Activated CD4-positive, alpha-beta memory T cell treated with anti-CD3 and anti-CD28 coated beads for 36 hours (primary cell): ENCODE measurements at regions of chr6 and their contacts with region 1.

Region 1: DNA sequence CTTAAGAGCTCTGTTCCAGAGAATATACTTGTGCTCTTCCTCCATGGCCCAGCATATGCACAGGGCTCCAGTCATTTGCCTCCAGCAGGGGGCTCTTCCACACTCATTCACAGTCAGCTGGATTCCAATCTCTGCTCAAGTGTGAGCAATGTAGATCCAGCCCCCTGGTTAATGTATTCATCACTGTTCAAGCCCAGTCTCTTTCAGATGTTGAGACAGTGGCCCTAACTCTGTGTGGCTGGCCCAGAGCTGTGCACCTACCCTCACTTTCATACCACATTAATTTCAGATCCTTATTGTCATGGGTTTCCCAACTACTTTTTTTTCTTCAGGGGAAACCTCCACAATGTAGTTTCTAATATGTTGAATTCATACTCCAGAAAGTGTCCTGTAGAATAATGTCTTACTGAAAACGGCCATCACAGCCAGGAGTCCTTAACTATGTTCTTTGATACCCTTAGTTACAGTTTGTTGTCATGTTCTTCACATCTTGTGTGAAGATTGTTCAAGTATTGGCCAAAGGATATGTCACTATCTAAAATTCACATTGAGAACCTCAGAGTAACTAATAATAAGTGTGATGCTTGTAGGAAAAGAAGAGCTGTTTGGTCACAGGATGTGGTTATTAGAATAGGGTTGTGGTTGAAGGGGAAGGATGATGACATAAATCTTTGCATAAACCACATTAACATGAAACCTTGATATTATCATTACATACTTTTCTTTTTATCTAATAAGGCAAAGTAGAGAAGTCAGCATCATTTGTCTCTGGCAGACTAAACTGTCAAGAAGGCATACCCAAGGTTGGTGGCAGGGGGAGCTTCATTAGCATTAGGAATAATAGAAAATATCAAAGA is 14.4 kb upstream of the HLA-DQA1 start:
- DNase-seq: peak; percentile 57
- H3K4me3 Mint-ChIP-seq: peak overlapping the region; percentile 42
- H3K27ac Mint-ChIP-seq: peak overlapping the region; percentile 78
- H3K4me1 Mint-ChIP-seq: peaks cover 39% of the 10 kb centered on the region
- H3K27me3 Mint-ChIP-seq: no peaks in the 10 kb centered on the region

Region 2: DNA sequence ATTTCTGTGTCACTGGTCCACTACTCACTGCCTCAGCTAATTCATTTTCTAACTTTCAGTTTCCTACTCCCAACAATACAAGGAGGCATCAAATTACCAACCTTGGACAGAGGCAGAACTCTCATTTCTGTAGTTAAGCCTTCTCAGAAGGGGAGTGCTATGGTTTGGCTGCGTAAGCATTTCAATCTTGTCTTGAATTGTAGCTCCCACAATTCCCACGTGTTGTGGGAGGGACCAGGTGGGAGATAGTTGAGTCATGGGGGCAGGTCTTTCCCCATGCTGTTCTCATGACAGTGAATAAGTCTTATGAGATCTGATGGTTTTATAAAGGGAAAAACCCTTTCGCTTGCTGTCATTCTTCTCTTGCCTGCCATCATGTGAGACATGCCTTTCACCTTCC is 160.2 kb before region 1 on chr6:
- CTCF ChIA-PET with region 1: interaction called, 5 read pairs
- POLR2A ChIA-PET with region 1: no interaction called
- intact Hi-C with region 1: loop called (anchors 5 kb)
- DNase-seq: peak; percentile 81
- H3K4me3 Mint-ChIP-seq: no peak overlapping the region
- H3K27ac Mint-ChIP-seq: no peak overlapping the region
- H3K4me1 Mint-ChIP-seq: peaks cover 11% of the 10 kb centered on the region
- H3K27me3 Mint-ChIP-seq: peaks cover 44% of the 10 kb centered on the region

Region 3: DNA sequence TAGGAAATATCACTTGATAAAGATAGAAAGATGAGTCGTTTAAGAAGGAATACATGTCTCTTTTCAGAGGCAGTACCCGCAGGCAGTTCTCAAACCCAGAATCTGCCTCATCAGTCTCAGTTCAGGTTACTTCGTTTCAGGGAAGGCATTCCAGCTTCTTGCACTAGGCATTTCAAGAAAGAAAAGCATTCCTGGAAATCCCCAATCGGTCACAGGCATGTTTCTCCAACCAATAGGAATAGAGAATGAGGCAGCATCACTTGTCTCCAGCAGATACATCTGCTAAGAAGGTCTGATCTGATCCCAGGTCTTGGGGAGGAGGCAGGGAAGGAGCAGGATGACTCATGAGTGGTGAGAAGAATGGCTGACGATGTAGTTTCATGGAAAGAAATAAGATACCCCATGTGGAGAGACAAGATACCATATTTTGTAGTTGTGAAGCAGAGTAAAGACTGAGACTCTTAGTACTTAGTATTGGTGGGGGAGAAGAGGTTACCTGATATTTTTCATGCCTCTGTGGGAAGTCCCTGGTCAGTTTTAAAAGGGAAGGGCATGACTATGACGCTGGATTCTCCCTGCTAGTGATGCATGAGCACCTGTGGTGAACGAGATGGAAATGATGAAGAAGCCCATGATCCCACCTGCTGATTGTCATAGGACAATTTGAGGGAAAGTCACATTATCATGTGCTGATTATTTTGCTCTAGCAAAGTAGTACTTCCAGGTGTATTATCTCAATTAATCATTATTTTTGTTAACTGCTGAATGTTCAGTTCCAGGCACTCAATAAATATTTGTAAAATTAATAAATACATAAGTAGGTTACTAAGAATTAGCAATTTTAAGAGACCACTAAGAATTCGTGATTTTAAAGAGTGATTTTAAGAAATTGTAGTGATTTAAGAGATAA is 12.8 kb before region 1 on chr6:
- CTCF ChIA-PET with region 1: interaction called, 4 read pairs
- POLR2A ChIA-PET with region 1: interaction called, 3 read pairs
- intact Hi-C with region 1: loop called (anchors 1 kb)
- DNase-seq: peak; percentile 46
- H3K4me3 Mint-ChIP-seq: no peak overlapping the region
- H3K27ac Mint-ChIP-seq: no peak overlapping the region
- H3K4me1 Mint-ChIP-seq: peaks cover 14% of the 10 kb centered on the region
- H3K27me3 Mint-ChIP-seq: no peaks in the 10 kb centered on the region

Region 4: DNA sequence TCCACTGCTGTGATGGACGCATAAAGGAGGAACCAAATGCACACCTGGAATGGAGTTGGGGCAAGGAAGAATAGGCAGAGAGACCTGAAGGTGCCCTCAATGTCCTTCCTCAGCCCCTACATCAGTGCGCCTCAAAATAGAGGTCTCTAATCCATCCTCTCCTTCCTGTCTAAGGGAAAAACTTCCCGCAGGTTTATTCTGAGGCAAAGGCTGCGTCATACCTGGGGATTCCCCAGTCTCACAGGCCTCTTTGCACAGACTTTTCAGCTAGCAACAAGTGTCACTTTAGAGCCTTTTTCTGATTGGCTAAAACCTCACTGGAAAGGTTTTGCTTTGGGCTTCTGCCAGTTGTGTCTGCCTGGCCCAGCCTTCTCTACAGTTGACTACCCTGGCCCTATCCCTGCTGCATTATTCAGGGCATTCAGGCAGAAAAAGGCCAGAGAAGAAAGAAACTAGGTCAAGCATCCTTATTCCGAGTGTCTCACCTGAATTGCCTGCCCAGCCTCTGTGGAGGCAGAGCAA is 45.5 kb after region 1 on chr6:
- CTCF ChIA-PET with region 1: interaction called, 3 read pairs
- POLR2A ChIA-PET with region 1: no interaction called
- intact Hi-C with region 1: loop called (anchors 1 kb)
- DNase-seq: peak; percentile 73
- H3K4me3 Mint-ChIP-seq: no peak overlapping the region
- H3K27ac Mint-ChIP-seq: no peak overlapping the region
- H3K4me1 Mint-ChIP-seq: peaks cover 45% of the 10 kb centered on the region
- H3K27me3 Mint-ChIP-seq: peaks cover 24% of the 10 kb centered on the region

Region 5: GRCh38 chr6:32685603-32686002 is 62.8 kb after region 1 on chr6:
- CTCF ChIA-PET with region 1: interaction called, 3 read pairs
- POLR2A ChIA-PET with region 1: no interaction called
- intact Hi-C with region 1: loop called (anchors 1 kb)
- DNase-seq: peak; percentile 22
- H3K4me3 Mint-ChIP-seq: no peak overlapping the region
- H3K27ac Mint-ChIP-seq: peak overlapping the region; percentile 50
- H3K4me1 Mint-ChIP-seq: peaks cover 19% of the 10 kb centered on the region
- H3K27me3 Mint-ChIP-seq: peaks cover 1% of the 10 kb centered on the region

Region 6: GRCh38 chr6:32700391-32701040 is 77.7 kb after region 1 on chr6:
- CTCF ChIA-PET with region 1: interaction called, 14 read pairs
- POLR2A ChIA-PET with region 1: no interaction called
- intact Hi-C with region 1: no loop called
- DNase-seq: peak; percentile 20
- H3K4me3 Mint-ChIP-seq: no peak overlapping the region
- H3K27ac Mint-ChIP-seq: no peak overlapping the region
- H3K4me1 Mint-ChIP-seq: peaks cover 2% of the 10 kb centered on the region
- H3K27me3 Mint-ChIP-seq: peaks cover 18% of the 10 kb centered on the region

Region 7: GRCh38 chr6:32796848-32797776 is 174.3 kb after region 1 on chr6:
- CTCF ChIA-PET with region 1: no interaction called
- POLR2A ChIA-PET with region 1: no interaction called
- intact Hi-C with region 1: no loop called
- DNase-seq: peak; percentile 84
- H3K4me3 Mint-ChIP-seq: peak overlapping the region; percentile 38
- H3K27ac Mint-ChIP-seq: no peak overlapping the region
- H3K4me1 Mint-ChIP-seq: peaks cover 16% of the 10 kb centered on the region
- H3K27me3 Mint-ChIP-seq: peaks cover 54% of the 10 kb centered on the region